A673 (cell line): ENCODE measurements at regions of chr10 and their contacts with region 1.

Region 1: DNA sequence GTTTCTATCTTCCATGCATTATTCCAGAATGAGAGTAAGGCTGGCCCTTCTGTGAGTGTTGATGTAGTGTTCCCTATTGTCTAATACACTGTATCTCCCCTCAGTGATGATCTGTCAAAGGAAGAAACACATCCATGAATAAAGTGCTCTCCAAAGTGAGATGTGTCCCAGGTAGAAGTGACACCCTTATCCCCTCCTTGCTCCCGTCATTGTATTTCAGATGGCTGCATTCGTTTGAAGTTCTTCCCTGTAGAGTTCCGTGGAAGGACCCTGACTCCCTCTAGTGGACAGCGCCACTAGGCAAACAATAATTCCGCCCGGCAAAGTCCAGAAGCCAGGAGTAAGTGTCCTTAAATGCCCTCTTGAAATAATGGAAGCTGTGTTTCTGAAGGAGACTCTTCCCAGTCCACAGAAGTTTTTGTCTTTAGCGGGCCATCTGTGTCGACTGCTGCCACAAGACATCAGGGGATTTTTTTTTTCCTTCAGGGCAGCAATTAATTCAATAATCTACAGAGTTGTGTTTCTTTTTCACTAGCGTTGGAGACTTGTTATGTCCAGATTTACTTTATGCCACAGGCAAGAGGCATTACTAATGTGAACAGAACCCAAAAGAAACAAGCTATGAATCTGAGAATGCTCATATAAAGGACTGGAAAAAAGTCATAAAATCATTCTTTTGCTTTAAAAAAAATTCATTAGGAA is 64.6 kb downstream of the THNSL1 start:
- DNase-seq: peak; percentile 86
- H3K4me3 ChIP-seq: no peak overlapping the region
- H3K27ac ChIP-seq: no peak overlapping the region
- H3K4me1 ChIP-seq: no peaks in the 10 kb centered on the region
- H3K27me3 ChIP-seq: no peaks in the 10 kb centered on the region
- CTCF ChIP-seq: peak; percentile 95

Region 2: GRCh38 chr10:24642622-24643417 is 438.2 kb before region 1 on chr10:
- CTCF ChIA-PET with region 1: interaction called, 3 read pairs
- POLR2A ChIA-PET with region 1: no interaction called
- intact Hi-C with region 1: loop called (anchors 1 kb)
- DNase-seq: peak; percentile 80
- H3K4me3 ChIP-seq: no peak overlapping the region
- H3K27ac ChIP-seq: no peak overlapping the region
- H3K4me1 ChIP-seq: no peaks in the 10 kb centered on the region
- H3K27me3 ChIP-seq: no peaks in the 10 kb centered on the region
- CTCF ChIP-seq: peak; percentile 87

Region 3: DNA sequence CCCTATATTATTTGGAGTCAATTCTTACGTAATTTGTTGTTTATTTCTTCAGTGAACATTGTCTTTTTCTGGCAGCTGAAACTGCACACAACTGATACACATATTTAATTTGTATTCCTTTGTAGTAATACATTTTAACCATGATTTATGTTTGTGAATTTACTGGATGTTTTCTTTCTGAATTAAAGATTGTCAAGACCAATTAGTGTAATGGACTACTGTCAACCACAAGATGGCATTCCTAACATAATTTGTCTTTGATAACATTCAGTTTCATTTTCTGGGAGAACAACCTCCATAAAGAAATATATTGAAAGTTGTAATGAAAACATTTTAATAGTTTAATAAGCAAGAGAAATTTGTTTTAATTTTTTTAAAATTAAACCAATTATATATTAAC is 54.6 kb before region 1 on chr10:
- CTCF ChIA-PET with region 1: no interaction called
- POLR2A ChIA-PET with region 1: no interaction called
- intact Hi-C with region 1: loop called (anchors 5 kb)
- DNase-seq: peak; percentile 22
- H3K4me3 ChIP-seq: no peak overlapping the region
- H3K27ac ChIP-seq: no peak overlapping the region
- H3K4me1 ChIP-seq: no peaks in the 10 kb centered on the region
- H3K27me3 ChIP-seq: no peaks in the 10 kb centered on the region
- CTCF ChIP-seq: peak; percentile 47; the same call in 1 of the 2 replicates